ENCODE measurements at regions of chr12 and their contacts with region 1.

Region 1: GRCh38 chr12:6533923-6534694 is at the start of gene GAPDH:
- DNase-seq: peak; percentile 96 to 97
- ATAC-seq: peak; percentile 90
- H3K4me3 ChIP-seq: peak within 1 kb of the TSS; percentile 60 to 75
- H3K27ac ChIP-seq: peak within 1 kb of the TSS; percentile 61 to 87
- H3K4me1 ChIP-seq: no peaks in the 10 kb centered on the region
- H3K27me3 ChIP-seq: peaks cover 0 to 1% of the 10 kb centered on the region in 2 donors
- total RNA-seq, gene GAPDH: 1,856 to 2,021 TPM

Region 2: GRCh38 chr12:6323340-6323994 is 210.6 kb before region 1 on chr12:
- intact Hi-C with region 1: loop called in 1 of 2 experiments (anchors 5 kb)
- DNase-seq: peak in 1 of 2 donors; percentile 64
- ATAC-seq: peak; percentile 57
- H3K4me3 ChIP-seq: no peak overlapping the region
- H3K27ac ChIP-seq: peak overlapping the region; percentile 38 to 80
- H3K4me1 ChIP-seq: no peaks in the 10 kb centered on the region
- H3K27me3 ChIP-seq: no peaks in the 10 kb centered on the region

Region 3: GRCh38 chr12:6335451-6336078 is 198.5 kb before region 1 on chr12:
- intact Hi-C with region 1: loop called (anchors 5 kb)
- DNase-seq: peak; percentile 92
- ATAC-seq: peak; percentile 50
- H3K4me3 ChIP-seq: no peak overlapping the region
- H3K27ac ChIP-seq: peak overlapping the region; percentile 40 to 95
- H3K4me1 ChIP-seq: no peaks in the 10 kb centered on the region
- H3K27me3 ChIP-seq: no peaks in the 10 kb centered on the region

Region 4: GRCh38 chr12:6423267-6424007 is 110.7 kb before region 1 on chr12:
- intact Hi-C with region 1: loop called (anchors 5 kb)
- DNase-seq: peak; percentile 90 to 92
- ATAC-seq: peak; percentile 96
- H3K4me3 ChIP-seq: no peak overlapping the region
- H3K27ac ChIP-seq: no peak overlapping the region
- H3K4me1 ChIP-seq: no peaks in the 10 kb centered on the region
- H3K27me3 ChIP-seq: no peaks in the 10 kb centered on the region

Region 5: DNA sequence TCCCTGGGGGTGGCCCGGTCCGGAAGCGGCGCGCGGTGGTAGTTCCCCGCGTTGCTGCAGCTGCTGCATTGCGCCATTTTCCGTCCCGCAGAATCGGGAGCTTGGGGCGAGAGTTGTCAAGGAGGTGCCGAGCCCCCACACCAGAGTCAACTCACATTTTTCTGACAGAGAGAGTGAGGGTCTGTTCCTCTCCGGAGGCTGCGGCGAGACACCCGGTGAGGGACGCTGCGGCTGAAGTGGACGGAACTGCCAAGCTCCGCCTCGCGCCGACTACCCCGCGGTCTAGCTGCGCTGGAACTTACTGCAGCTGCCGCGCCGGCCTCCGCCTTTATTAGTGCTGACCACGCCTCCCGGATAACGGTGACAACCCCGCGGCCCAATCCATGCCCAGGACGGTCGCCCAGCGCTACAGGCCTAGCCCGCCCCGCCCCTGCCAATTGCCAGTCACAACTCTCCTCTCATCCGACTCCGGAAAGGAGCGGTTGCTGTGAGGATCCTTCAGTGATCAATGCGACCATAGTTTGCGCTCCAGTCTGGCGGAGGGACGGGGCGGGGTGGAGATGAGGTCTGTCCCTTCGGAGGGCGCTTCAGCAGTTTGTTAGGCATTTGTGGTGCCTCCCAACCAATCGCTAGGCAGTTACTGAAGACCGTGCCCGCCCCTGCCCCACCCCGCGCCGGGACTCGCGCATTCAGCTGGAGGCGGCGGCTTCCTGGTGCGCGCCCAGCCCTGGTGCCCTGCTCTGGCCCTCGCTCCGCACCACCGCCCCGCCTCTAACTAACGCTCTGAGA is 63.5 kb before region 1 on chr12 and contains the start of gene VAMP1:
- intact Hi-C with region 1: loop called (anchors 2 kb)
- DNase-seq: peak; percentile 99
- ATAC-seq: peak; percentile 99
- H3K4me3 ChIP-seq: peak within 1 kb of the TSS; percentile 32 to 47
- H3K27ac ChIP-seq: peak within 1 kb of the TSS in 1 of 2 donors; percentile 83
- H3K4me1 ChIP-seq: peaks cover 2 to 3% of the 10 kb centered on the region in 2 donors
- H3K27me3 ChIP-seq: no peaks in the 10 kb centered on the region
- total RNA-seq, gene VAMP1: 9.7 to 23.9 TPM

Region 6: GRCh38 chr12:6493497-6494257 is 40.4 kb before region 1 on chr12 and contains the start of gene NCAPD2:
- intact Hi-C with region 1: loop called (anchors 2 kb)
- DNase-seq: peak; percentile 97
- ATAC-seq: peak; percentile 97
- H3K4me3 ChIP-seq: peak within 1 kb of the TSS; percentile 87 to 93
- H3K27ac ChIP-seq: peak within 1 kb of the TSS; percentile 89 to 96
- H3K4me1 ChIP-seq: peaks cover 0 to 5% of the 10 kb centered on the region in 2 donors
- H3K27me3 ChIP-seq: no peaks in the 10 kb centered on the region
- total RNA-seq, gene NCAPD2: 19.9 to 32.8 TPM

Region 7: DNA sequence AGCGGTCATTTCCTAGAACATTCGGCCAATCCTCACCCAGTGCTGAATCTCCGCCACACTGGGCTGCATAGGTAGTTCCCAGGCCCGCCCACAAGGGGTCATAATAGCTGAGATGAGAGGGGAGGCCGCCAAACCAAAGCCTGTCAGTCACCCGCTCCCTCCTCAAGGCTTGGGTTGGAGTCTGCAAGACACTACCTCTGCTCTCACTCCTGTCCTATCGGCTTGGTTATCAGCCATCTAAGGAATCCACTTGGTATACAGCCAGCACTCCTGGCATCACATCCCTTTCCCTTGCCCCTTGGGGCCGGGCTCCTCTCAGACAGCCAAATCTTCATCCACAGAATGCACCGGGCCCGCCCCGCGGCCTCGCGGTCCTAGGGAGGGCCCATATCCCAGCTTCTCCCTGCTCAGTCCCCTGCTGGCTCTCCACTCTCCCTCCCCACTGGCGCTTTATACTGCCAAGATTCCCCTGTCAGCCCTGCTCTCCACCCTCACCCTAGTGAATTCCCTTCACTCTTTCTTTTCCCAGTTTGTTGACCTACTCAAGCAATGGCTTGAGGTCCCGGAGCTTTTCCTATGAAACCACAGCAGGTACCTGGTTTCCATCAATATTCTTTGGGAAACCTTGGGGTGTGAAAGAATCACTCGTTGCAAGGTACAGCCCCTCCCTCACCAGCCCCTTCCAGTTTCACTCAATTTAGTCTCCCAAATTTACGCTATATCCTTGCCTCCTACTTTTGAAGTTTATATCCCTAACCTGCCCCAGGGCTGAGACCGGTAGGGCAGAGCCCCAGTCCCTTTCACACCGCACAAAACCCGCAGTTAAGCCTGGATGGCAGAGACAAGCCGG is 20.3 kb after region 1 on chr12:
- intact Hi-C with region 1: loop called in 1 of 2 experiments (anchors 2 kb)
- DNase-seq: peak; percentile 86 to 92
- ATAC-seq: peak; percentile 70
- H3K4me3 ChIP-seq: peak overlapping the region; percentile 63 to 78
- H3K27ac ChIP-seq: peak overlapping the region in 1 of 2 donors; percentile 50
- H3K4me1 ChIP-seq: peaks cover 0 to 3% of the 10 kb centered on the region in 2 donors
- H3K27me3 ChIP-seq: no peaks in the 10 kb centered on the region

Region 8: DNA sequence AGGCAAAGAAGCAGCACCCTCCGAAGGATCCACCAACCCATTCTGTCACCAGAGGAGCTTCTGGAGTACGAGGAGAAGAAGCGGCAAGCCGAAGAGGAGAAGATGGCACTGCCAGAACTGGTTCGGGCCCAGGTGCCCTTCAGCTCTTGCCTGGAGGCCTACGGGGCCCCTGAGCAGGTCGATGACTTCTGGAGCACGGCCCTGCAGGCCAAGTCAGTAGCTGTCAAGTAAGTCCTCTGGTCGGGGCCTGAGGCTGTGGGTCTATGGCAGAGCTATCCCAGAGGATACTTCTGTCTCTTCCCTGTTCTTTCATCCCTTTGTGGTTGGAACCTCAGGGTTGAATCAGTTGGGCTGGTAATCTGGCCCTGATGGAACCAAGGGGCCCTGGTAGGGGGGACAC is 327.3 kb after region 1 on chr12:
- intact Hi-C with region 1: no loop called
- DNase-seq: no peak
- ATAC-seq: no peak
- H3K4me3 ChIP-seq: no peak overlapping the region
- H3K27ac ChIP-seq: no peak overlapping the region
- H3K4me1 ChIP-seq: no peaks in the 10 kb centered on the region
- H3K27me3 ChIP-seq: no peaks in the 10 kb centered on the region